GM12878 (cell line): ENCODE measurements at regions of chr13 and their contacts with region 1.

Region 1: DNA sequence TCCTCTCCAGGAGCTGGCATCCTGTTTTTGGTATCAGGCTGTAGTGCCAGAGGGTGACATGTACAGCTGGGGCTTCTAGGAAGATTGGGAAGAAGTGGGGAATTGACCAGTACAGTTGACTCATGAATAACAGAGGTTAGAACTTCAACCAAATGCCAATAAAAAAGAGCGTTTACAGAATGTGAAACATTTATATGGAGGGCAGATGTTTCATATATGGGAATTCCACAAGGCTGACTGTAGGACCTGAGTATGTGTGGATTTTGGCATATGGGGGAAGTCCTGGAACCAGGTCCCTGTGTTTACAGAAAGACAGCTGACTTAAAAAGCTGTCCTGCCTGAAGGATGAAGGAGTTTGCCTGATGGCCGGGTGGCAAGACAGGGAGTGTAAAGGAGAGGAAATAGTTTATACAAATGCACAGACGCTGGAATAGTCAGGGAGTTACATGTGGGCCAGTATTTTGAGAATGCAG is 5.2 kb downstream of the CHAMP1 start:
- DNase-seq: no peak
- ATAC-seq: no peak
- H3K4me3 ChIP-seq: no peak overlapping the region
- H3K27ac ChIP-seq: no peak overlapping the region; the same call in 1 of the 2 replicates
- H3K4me1 ChIP-seq: no peaks in the 10 kb centered on the region
- H3K27me3 ChIP-seq: no peaks in the 10 kb centered on the region
- CTCF ChIP-seq: no peak
- EP300 ChIP-seq: no peak
- POLR2A ChIP-seq: no peak
- RAD21 ChIP-seq: no peak

Region 2: DNA sequence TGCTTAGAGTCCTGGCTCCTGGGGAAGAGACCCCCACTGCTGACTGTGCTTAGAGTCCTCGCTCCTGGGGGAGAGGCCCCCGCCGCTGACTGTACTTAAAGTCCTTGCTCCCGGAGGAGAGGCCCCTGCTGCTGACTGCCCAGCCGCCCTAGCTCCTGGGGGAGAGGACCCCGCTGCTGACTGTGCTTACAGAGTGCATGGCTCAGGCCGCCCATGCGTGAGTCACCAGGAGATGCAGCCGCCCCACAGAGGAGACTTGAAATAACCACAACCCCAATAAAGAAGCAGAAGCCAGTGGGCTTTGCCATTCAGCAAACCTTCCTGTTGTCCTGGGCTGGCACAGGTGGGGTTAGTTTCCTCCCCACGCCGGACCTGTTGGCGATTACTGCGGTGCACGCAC is 266.5 kb before region 1 on chr13:
- CTCF ChIA-PET with region 1: no interaction called
- POLR2A ChIA-PET with region 1: no interaction called
- RAD21 ChIA-PET with region 1: no interaction called
- SMC1A ChIA-PET with region 1: no interaction called
- in situ Hi-C with region 1: no loop called
- intact Hi-C with region 1: no loop called
- DNase-seq: no peak
- ATAC-seq: no peak
- H3K4me3 ChIP-seq: no peak overlapping the region
- H3K27ac ChIP-seq: no peak overlapping the region
- H3K4me1 ChIP-seq: peaks cover 16% of the 10 kb centered on the region
- H3K27me3 ChIP-seq: no peaks in the 10 kb centered on the region
- CTCF ChIP-seq: no peak
- EP300 ChIP-seq: no peak
- POLR2A ChIP-seq: no peak
- RAD21 ChIP-seq: no peak

Region 3: DNA sequence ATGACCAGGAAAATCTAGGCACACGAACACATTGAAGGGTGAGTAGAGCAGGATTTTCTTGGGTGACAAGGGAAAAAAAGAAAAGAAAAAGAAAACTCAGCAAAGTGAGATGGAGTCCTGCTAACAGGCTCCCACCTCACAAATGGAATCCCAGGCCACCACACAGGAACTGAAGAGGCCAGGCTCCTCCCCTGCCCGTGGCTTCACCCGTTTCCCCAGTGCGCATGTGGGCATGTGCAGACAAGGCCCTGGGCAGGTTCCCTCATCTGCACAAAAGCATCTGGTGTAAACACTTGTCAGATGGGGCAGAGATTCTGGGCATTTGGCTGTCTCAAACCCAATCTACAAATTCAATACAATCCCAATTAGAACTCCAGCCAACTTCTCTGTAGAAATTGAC is 115.9 kb before region 1 on chr13:
- CTCF ChIA-PET with region 1: no interaction called
- POLR2A ChIA-PET with region 1: no interaction called
- RAD21 ChIA-PET with region 1: no interaction called
- SMC1A ChIA-PET with region 1: no interaction called
- in situ Hi-C with region 1: no loop called
- intact Hi-C with region 1: no loop called
- DNase-seq: no peak
- ATAC-seq: no peak
- H3K4me3 ChIP-seq: no peak overlapping the region
- H3K27ac ChIP-seq: no peak overlapping the region
- H3K4me1 ChIP-seq: no peaks in the 10 kb centered on the region
- H3K27me3 ChIP-seq: no peaks in the 10 kb centered on the region
- CTCF ChIP-seq: no peak
- EP300 ChIP-seq: no peak
- POLR2A ChIP-seq: no peak
- RAD21 ChIP-seq: no peak

Region 4: DNA sequence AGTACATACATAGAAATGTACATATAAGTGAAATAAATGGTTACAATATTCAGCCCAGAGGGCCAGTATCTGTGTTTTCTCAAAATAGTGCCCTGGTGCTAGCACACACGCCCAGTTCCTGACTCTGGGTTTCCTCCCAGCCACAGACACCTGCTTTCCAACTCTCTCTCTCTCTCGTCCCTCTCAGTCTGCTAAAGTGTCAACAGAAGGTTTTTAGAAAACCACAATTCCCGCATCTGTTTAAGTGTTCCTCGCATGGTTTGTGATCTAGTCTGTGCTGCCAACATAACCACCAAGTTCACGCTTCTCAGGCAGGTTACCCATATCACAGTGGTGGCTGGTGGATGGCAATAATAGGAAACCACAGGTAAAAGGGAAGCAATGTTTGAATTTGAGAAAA is 55.9 kb before region 1 on chr13:
- CTCF ChIA-PET with region 1: no interaction called
- POLR2A ChIA-PET with region 1: no interaction called
- RAD21 ChIA-PET with region 1: no interaction called
- SMC1A ChIA-PET with region 1: no interaction called
- in situ Hi-C with region 1: no loop called
- intact Hi-C with region 1: no loop called
- DNase-seq: peak; percentile 9
- ATAC-seq: peak; percentile 62
- H3K4me3 ChIP-seq: no peak overlapping the region
- H3K27ac ChIP-seq: peak overlapping the region; percentile 54; the same call in 1 of the 2 replicates
- H3K4me1 ChIP-seq: peaks cover 47% of the 10 kb centered on the region
- H3K27me3 ChIP-seq: no peaks in the 10 kb centered on the region
- CTCF ChIP-seq: no peak
- EP300 ChIP-seq: no peak
- POLR2A ChIP-seq: no peak
- RAD21 ChIP-seq: no peak

Region 5: DNA sequence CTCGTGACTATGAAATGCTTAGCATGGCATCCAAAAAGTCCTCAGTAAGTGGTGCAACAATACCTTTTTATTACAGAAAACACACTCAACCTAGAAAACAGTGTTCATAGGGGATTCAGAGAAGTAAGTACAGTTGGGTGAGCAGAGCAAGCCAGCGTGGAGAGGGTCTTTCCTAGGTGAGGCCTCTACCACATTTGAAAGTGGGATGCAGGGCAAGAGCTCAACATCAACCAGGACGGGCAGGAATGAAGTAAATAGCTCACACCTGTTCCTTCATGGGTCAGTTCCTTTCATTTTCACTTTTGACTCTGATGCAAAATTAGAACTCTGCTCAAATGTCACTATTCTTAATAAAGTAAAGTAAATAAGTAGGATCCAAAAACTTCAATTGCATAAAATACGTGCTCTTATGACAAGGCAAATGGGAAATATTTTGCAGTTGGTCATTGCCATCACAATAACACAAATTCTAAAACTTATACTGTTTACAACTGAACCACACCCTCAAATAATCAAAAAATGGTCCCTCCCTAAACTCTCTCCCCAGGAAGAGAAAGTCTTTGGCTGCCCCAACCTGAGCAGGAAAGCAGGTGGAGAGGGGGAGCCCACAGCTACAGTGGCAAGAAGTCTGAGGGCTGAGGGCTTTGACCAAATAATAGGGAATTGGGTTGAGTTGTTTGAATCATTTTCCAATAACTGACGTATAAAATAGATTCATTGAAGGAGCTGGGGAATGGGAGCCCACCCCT is 15.0 kb after region 1 on chr13:
- CTCF ChIA-PET with region 1: interaction called, 9 read pairs
- POLR2A ChIA-PET with region 1: interaction called, 19 read pairs
- RAD21 ChIA-PET with region 1: interaction called, 6 read pairs
- SMC1A ChIA-PET with region 1: interaction called, 43 read pairs
- in situ Hi-C with region 1: no loop called
- intact Hi-C with region 1: loop called (anchors 1 kb)
- DNase-seq: no peak
- ATAC-seq: peak; percentile 81
- H3K4me3 ChIP-seq: no peak overlapping the region; the same call in 1 of the 2 replicates
- H3K27ac ChIP-seq: peak overlapping the region; percentile 49
- H3K4me1 ChIP-seq: peaks cover 10% of the 10 kb centered on the region
- H3K27me3 ChIP-seq: no peaks in the 10 kb centered on the region
- CTCF ChIP-seq: no peak
- EP300 ChIP-seq: no peak
- POLR2A ChIP-seq: no peak
- RAD21 ChIP-seq: no peak

Region 6: DNA sequence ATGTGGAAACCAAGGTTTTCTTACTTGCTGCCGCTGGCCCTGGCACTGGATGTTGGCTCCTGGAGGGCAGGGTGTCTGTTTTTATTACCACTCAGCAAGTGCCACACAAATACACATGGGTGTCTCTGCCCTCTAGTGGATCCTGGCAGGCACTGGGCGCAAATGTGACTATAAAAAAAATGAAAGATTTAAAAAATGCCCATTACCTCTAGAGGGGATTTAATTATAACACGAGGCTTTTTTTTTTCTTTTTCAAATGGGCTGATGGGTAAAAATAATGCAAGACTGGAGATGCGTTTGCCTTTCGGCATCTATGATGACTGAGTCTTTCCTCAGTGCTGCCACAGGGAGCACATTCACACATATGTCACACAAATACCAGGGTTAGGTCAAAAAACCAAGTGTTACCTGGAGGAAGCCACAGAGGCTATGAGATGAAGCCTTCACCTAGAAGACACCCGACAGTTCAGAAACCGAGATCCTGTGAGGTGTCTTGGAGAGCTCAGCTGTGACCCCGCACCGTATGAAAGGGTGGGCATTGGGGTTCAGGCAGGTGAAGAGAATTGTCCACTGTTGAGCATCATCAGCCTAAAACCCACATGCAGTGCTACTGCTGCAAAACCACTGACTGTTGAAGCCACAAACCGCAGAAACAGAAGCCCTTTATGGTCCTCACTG is 20.5 kb after region 1 on chr13:
- CTCF ChIA-PET with region 1: interaction called, 5 read pairs
- POLR2A ChIA-PET with region 1: interaction called, 19 read pairs
- RAD21 ChIA-PET with region 1: interaction called, 6 read pairs
- SMC1A ChIA-PET with region 1: interaction called, 43 read pairs
- in situ Hi-C with region 1: no loop called
- intact Hi-C with region 1: no loop called
- DNase-seq: no peak
- ATAC-seq: peak; percentile 88
- H3K4me3 ChIP-seq: no peak overlapping the region
- H3K27ac ChIP-seq: no peak overlapping the region
- H3K4me1 ChIP-seq: peaks cover 11% of the 10 kb centered on the region
- H3K27me3 ChIP-seq: no peaks in the 10 kb centered on the region
- CTCF ChIP-seq: peak; percentile 59 to 83 (median 70)
- EP300 ChIP-seq: no peak
- POLR2A ChIP-seq: no peak
- RAD21 ChIP-seq: peak; percentile 79